Esophagus squamous epithelium (tissue), 5 donors: ENCODE measurements at regions of chr20 and their contacts with region 1.

Region 1: DNA sequence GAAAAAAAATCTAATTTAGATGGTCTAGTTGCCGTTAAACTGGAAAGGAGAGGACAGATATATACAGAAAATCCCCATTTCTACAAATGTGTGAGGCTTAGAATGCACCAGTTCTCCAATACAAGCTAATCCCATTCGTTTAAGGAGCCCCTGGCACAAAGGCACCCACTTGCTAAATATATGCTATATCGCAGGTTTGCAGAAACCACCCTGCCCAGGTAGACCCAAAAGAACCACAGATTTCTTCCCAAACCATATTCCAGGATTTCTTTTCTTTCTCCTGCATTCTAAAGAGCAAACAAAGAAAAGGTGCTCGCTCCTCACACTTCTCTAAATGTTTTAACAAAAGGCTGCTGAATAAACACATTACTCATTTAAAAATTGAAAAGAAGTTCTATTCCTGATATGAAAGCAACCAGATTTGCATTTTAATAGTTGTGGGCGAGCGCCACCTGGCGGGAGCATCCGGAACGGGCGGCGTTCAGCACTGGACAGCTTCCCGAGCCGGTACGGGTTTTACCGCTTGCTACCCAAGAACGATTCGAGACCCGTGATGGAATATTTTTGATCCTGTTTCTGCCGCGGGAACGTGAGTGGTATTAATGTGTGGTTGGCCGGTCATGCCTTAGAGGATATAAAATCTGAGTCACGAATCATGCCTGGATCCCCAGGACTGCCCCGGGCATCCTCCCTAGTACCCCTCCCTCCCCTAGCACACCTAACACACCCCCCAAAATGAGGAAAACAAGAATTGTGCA is 2.1 kb downstream of the PTPRT start:
- DNase-seq: no peak
- H3K4me3 ChIP-seq: peak overlapping the region in 1 of 4 donors; percentile 15
- H3K27ac ChIP-seq: no peak overlapping the region
- H3K4me1 ChIP-seq: peaks cover 7 to 25% (median 9%) of the 10 kb centered on the region in 3 donors
- H3K27me3 ChIP-seq: peaks cover 0 to 85% (median 10%) of the 10 kb centered on the region in 4 donors
- CTCF ChIP-seq: peak; percentile 71 to 91 (median 86)
- POLR2A ChIP-seq: no peak

Region 2: DNA sequence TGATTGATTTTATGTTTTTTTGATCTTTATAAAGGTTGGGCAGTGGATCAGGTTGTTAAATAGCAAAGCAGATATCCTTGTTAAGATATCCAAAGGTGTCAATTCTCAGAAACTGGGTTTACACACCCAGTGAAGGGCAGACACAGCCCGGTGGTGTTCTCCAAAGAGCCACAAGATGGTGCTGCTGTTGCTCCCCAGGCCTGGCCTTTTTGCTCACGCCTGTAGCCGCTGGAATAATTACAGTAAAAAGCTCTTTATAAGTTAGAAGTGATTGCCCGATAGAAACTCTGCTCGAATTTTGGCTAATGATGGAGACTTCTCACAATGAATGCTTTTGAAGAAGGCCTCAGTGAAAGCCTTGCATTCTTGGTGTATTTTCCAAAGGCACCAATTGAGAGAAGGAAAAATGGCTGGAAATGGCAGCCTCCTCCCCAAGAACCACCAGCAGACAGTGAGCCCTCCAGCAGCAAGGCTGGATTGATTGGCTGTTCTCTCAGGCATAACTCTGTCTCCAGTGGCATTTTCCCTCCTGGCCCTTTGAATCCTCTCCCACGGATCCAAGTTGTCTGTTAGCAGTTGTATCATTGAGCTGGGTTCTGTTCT is 1449.0 kb before region 1 on chr20:
- intact Hi-C with region 1: loop called (anchors 5 kb)
- DNase-seq: no peak
- H3K4me3 ChIP-seq: no peak overlapping the region
- H3K27ac ChIP-seq: no peak overlapping the region
- H3K4me1 ChIP-seq: no peaks in the 10 kb centered on the region
- H3K27me3 ChIP-seq: no peaks in the 10 kb centered on the region
- CTCF ChIP-seq: peak; percentile 40 to 84 (median 68)
- POLR2A ChIP-seq: no peak

Region 3: GRCh38 chr20:41889126-41889870 is 1298.4 kb before region 1 on chr20:
- intact Hi-C with region 1: loop called (anchors 10 kb)
- DNase-seq: no peak
- H3K4me3 ChIP-seq: no peak overlapping the region
- H3K27ac ChIP-seq: peak overlapping the region in 2 of 4 donors; percentile 15 to 84
- H3K4me1 ChIP-seq: peaks cover 0 to 46% (median 7%) of the 10 kb centered on the region in 3 donors
- H3K27me3 ChIP-seq: no peaks in the 10 kb centered on the region
- CTCF ChIP-seq: peak in 3 of 6 experiments; percentile 25 to 70 (median 43)
- POLR2A ChIP-seq: no peak

Region 4: DNA sequence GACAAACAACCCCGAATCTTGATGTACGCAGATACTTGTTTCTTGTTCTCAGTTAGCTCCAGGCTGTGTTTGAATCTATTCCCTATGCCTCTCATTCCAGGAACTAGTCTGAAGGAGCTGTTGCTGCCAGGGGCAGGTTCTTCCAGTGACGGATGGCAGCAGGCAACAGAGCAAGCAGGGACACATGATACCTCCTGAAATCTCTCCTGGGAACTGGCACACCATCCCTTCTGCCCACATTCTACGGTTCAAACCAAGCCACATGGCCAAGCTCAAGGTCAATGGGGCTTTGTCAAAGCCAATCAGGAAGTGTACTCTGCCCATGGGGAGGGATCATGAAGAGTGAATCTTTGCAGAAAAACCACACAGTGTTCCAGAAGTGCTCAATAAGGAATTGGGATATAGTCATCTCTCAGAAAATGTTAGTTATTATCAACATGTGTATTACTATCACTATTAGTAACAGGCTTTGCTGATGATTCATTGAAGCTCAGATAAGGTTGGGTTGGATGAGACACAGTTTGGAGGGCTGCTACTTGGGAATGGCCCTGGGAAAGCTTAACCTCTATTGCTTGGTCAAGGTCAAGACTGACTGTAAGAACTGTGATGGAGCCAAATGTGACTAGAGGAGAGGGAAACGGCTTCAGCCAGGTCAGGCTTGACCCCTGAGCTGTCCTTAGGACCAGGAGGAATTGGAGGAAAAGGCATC is 452.8 kb before region 1 on chr20:
- intact Hi-C with region 1: no loop called
- DNase-seq: no peak
- H3K4me3 ChIP-seq: no peak overlapping the region
- H3K27ac ChIP-seq: no peak overlapping the region
- H3K4me1 ChIP-seq: no peaks in the 10 kb centered on the region
- H3K27me3 ChIP-seq: no peaks in the 10 kb centered on the region
- CTCF ChIP-seq: no peak
- POLR2A ChIP-seq: no peak

Region 5: DNA sequence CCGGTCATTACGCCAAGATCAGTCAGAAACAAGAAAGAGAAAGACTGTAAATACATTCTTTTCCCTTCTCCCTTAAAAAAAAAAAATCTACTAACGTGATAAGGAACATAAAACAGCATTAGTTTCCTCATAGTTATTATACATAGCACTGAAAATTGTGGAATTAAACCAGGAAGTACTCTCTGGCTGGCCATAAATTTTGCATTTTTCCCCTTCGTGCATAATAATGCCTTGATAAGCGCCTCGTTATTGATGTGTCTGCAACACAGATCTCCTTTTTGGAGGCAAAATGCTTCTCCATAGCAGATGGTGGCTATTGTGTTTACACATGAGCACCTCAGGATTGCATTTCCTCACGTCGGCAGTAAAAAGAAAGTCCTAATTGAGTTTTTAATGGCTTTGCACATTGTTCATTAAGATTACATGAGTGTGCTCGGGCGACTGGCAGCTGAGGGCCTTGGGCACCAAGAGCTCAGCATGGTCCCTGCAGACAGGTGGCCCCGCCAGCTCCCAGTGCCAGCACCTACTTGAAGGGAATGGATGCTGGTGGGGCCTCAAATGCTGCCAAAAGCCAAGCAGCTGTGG is 392.5 kb before region 1 on chr20:
- intact Hi-C with region 1: no loop called
- DNase-seq: no peak
- H3K4me3 ChIP-seq: no peak overlapping the region
- H3K27ac ChIP-seq: no peak overlapping the region
- H3K4me1 ChIP-seq: no peaks in the 10 kb centered on the region
- H3K27me3 ChIP-seq: peaks cover 0 to 3% (median 0%) of the 10 kb centered on the region in 4 donors
- CTCF ChIP-seq: no peak
- POLR2A ChIP-seq: no peak

Region 6: GRCh38 chr20:43833511-43834395 is 646.1 kb after region 1 on chr20:
- intact Hi-C with region 1: no loop called
- DNase-seq: no peak
- H3K4me3 ChIP-seq: no peak overlapping the region
- H3K27ac ChIP-seq: no peak overlapping the region
- H3K4me1 ChIP-seq: no peaks in the 10 kb centered on the region
- H3K27me3 ChIP-seq: peaks cover 0 to 12% (median 0%) of the 10 kb centered on the region in 4 donors
- CTCF ChIP-seq: no peak
- POLR2A ChIP-seq: no peak

Region 7: GRCh38 chr20:44018259-44018941 is 830.7 kb after region 1 on chr20:
- intact Hi-C with region 1: no loop called
- DNase-seq: no peak
- H3K4me3 ChIP-seq: peak overlapping the region in 1 of 4 donors; percentile 6
- H3K27ac ChIP-seq: peak overlapping the region in 3 of 4 donors; percentile 55 to 79 (median 59)
- H3K4me1 ChIP-seq: peaks cover 0 to 53% (median 19%) of the 10 kb centered on the region in 3 donors
- H3K27me3 ChIP-seq: peaks cover 0 to 10% (median 0%) of the 10 kb centered on the region in 4 donors
- CTCF ChIP-seq: no peak
- POLR2A ChIP-seq: no peak